CD8-positive, alpha-beta T cell (primary cell): ENCODE measurements at regions of chr2 and their contacts with region 1.

Region 1: GRCh38 chr2:241315093-241315878 is at the start of gene HDLBP:
- DNase-seq: peak; percentile 100
- ATAC-seq: peak; percentile 73
- H3K4me3 ChIP-seq: peak within 1 kb of the TSS; percentile 91 to 92
- H3K4me3 Mint-ChIP-seq: peak within 1 kb of the TSS; percentile 98
- H3K27ac ChIP-seq: peak within 1 kb of the TSS; percentile 92 to 99
- H3K27ac Mint-ChIP-seq: peak within 1 kb of the TSS; percentile 99
- H3K4me1 ChIP-seq: peaks cover 69% of the 10 kb centered on the region
- H3K4me1 Mint-ChIP-seq: peaks cover 74% of the 10 kb centered on the region
- H3K27me3 ChIP-seq: no peaks in the 10 kb centered on the region
- H3K27me3 Mint-ChIP-seq: no peaks in the 10 kb centered on the region
- CTCF ChIP-seq: no peak
- total RNA-seq, gene HDLBP: 97.5 to 104 TPM

Region 2: DNA sequence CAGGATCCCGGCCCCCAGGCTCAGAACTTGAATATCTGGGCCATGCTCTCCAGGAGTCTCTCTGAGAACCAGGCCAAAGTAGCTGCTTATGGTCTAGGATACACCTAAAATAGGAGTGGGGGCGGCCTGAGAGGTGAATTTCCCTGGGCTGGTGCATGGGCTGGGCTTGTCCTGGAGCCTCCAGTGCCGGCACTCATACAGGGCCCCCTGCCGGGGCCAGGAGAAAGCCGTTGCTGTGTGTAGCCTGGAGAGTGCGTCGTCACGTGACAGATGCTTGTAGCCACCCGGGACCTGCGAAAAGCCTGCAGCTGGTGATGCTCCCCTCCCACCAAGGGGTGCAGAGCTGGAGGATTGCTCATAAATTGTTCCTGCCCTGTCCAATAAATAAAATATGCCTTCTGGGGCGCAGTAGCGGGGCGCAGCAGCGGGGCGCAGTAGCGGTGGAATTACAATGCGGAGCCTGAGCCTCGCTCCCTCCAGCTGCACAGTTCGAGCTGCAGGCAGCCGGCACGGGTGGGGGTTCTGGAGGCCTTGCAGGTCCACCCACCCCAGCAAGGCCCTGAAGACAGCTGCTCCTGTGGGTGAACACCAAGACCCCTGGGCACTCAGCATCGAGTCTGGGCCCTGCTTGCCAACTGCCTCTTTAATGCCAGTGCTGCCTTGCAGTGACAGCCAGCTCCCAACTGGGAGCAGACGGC is 1580.0 kb before region 1 on chr2:
- CTCF ChIA-PET with region 1: no interaction called
- POLR2A ChIA-PET with region 1: no interaction called
- intact Hi-C with region 1: no loop called
- DNase-seq: no peak
- ATAC-seq: no peak
- H3K4me3 ChIP-seq: no peak overlapping the region
- H3K4me3 Mint-ChIP-seq: no peak overlapping the region
- H3K27ac ChIP-seq: no peak overlapping the region
- H3K27ac Mint-ChIP-seq: no peak overlapping the region
- H3K4me1 ChIP-seq: no peaks in the 10 kb centered on the region
- H3K4me1 Mint-ChIP-seq: no peaks in the 10 kb centered on the region
- H3K27me3 ChIP-seq: peaks cover 0 to 2% of the 10 kb centered on the region in 2 experiments
- H3K27me3 Mint-ChIP-seq: no peaks in the 10 kb centered on the region
- CTCF ChIP-seq: no peak

Region 3: DNA sequence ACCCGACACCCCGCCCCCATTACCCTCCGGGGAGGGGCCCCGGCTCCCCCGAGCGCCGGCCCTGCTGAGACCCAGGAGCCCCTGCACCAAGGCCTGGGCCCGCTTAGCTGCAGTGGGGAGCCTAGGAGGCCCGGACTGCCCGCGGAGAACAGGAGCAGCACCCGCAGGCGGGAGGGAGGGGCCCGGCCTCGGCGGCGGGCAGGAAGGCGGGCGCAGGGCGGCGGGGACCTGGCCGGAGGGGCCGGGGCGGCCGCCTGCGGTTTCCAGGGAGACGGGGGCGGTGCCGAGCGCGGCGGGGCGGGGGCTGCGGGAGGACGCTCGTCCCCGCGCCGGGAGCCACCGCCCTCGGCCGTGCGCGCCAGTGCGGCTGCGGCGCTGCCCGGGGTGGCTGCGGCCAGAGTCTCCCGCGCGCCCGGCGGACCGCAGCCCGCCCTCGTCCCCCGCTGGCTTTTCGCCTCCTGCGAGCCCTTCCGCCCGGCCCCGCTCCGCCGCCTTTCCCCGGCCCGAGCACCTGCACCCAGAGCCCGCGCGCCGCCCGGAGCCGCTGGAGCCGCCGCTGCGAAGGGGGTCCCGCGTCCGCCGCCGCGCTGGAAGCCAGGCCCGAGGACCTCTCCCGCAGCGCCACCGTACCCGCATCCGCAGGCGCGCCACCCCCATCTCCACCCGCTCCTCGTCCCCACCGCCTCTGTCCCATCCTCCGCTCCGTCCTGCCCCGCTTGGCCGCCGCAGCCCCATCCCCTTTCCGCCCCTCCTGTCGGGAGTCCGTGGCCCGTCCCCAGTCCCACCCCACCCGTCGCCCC is 862.6 kb before region 1 on chr2:
- CTCF ChIA-PET with region 1: no interaction called
- POLR2A ChIA-PET with region 1: no interaction called
- intact Hi-C with region 1: no loop called
- DNase-seq: peak in 1 of 9 experiments; percentile 17
- ATAC-seq: no peak
- H3K4me3 ChIP-seq: peak overlapping the region in 1 of 2 experiments; percentile 6
- H3K4me3 Mint-ChIP-seq: peak overlapping the region; percentile 71
- H3K27ac ChIP-seq: no peak overlapping the region
- H3K27ac Mint-ChIP-seq: no peak overlapping the region
- H3K4me1 ChIP-seq: peaks cover 17% of the 10 kb centered on the region
- H3K4me1 Mint-ChIP-seq: peaks cover 12% of the 10 kb centered on the region
- H3K27me3 ChIP-seq: peaks cover 26 to 28% of the 10 kb centered on the region in 2 experiments
- H3K27me3 Mint-ChIP-seq: peaks cover 38% of the 10 kb centered on the region
- CTCF ChIP-seq: no peak

Region 4: GRCh38 chr2:240560480-240561326 is 754.6 kb before region 1 on chr2:
- CTCF ChIA-PET with region 1: no interaction called
- POLR2A ChIA-PET with region 1: no interaction called
- intact Hi-C with region 1: loop called in 1 of 2 experiments (anchors 2 kb)
- DNase-seq: peak; percentile 98 to 100 (median 100)
- ATAC-seq: peak; percentile 59
- H3K4me3 ChIP-seq: peak overlapping the region; percentile 74 to 76
- H3K4me3 Mint-ChIP-seq: peak overlapping the region; percentile 89
- H3K27ac ChIP-seq: peak overlapping the region; percentile 82 to 84
- H3K27ac Mint-ChIP-seq: peak overlapping the region; percentile 96
- H3K4me1 ChIP-seq: peaks cover 80% of the 10 kb centered on the region
- H3K4me1 Mint-ChIP-seq: peaks cover 71% of the 10 kb centered on the region
- H3K27me3 ChIP-seq: no peaks in the 10 kb centered on the region
- H3K27me3 Mint-ChIP-seq: no peaks in the 10 kb centered on the region
- CTCF ChIP-seq: no peak

Region 5: DNA sequence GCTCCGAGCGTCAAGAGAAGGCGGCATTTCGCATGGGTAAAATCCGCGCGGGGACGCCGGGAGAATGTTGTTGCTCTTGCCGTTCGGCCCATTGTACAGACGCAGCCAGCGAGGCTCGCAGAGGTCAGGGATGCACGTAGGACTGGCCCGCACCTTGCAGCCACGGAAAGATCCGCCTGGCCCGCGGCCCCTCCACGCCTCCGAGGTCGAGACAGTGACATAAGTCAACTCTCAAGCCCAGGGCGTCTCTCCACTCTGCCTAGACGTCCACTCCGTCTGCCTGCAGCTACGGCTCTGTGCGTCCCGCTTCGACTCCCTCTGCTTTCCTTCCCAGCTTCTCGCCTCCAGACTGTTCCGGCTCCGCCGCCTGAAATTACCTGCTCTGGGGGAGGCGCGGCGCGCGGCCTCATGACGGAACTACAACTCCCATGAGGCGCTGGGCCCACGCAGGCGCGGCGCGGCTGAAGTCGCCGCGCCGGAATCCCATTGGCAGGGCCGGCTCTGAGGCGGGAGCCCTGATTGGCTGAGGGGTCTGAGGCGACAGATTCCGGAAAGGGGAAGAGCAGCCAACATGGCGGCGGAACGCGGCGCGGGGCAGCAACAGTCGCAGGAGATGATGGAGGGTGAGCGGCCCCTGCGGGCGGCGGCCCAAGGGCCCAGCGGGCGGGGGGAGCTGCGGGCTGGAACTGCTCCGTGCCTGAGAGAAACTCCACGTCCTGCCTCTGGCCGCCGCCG is 165.2 kb before region 1 on chr2 and contains the start of gene PPP1R7:
- CTCF ChIA-PET with region 1: no interaction called
- POLR2A ChIA-PET with region 1: no interaction called
- intact Hi-C with region 1: loop called (anchors 1 kb)
- DNase-seq: peak; percentile 91 to 98 (median 94)
- ATAC-seq: peak; percentile 79
- H3K4me3 ChIP-seq: peak within 1 kb of the TSS; percentile 95 to 99
- H3K4me3 Mint-ChIP-seq: peak within 1 kb of the TSS; percentile 99
- H3K27ac ChIP-seq: peak within 1 kb of the TSS; percentile 67 to 70
- H3K27ac Mint-ChIP-seq: peak within 1 kb of the TSS; percentile 95
- H3K4me1 ChIP-seq: peaks cover 21% of the 10 kb centered on the region
- H3K4me1 Mint-ChIP-seq: peaks cover 48% of the 10 kb centered on the region
- H3K27me3 ChIP-seq: no peaks in the 10 kb centered on the region
- H3K27me3 Mint-ChIP-seq: no peaks in the 10 kb centered on the region
- CTCF ChIP-seq: peak; percentile 51
- total RNA-seq, gene PPP1R7: 47.5 to 50.9 TPM

Region 6: DNA sequence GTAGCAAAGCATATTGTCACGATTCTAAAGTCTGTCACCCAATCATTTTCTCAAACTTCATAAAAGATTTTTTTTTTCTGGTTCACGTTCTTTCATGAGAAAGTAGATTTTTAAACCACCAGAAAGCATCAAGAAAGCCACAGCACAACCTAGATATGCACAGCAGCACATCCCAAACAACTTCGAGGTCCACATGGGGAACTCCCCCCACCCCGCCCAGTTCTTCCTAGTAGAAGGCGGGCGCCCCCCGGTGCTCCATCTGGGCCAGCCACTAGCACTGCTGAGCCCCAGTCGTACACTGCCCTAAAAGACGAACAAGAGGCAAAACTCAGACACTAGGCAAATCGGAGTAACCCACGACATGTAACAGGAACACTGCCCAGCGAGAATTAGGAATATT is 15.3 kb before region 1 on chr2:
- CTCF ChIA-PET with region 1: interaction called, 3 read pairs
- POLR2A ChIA-PET with region 1: interaction called, 27 read pairs
- intact Hi-C with region 1: loop called in 1 of 2 experiments (anchors 1 kb)
- DNase-seq: peak in 8 of 9 experiments; percentile 22 to 83 (median 68)
- ATAC-seq: peak; percentile 94
- H3K4me3 ChIP-seq: no peak overlapping the region
- H3K4me3 Mint-ChIP-seq: peak overlapping the region; percentile 56
- H3K27ac ChIP-seq: no peak overlapping the region
- H3K27ac Mint-ChIP-seq: peak overlapping the region; percentile 77
- H3K4me1 ChIP-seq: peaks cover 23% of the 10 kb centered on the region
- H3K4me1 Mint-ChIP-seq: peaks cover 66% of the 10 kb centered on the region
- H3K27me3 ChIP-seq: no peaks in the 10 kb centered on the region
- H3K27me3 Mint-ChIP-seq: no peaks in the 10 kb centered on the region
- CTCF ChIP-seq: peak; percentile 37

Region 7: GRCh38 chr2:241609859-241610793 is 294.8 kb after region 1 on chr2:
- CTCF ChIA-PET with region 1: no interaction called
- POLR2A ChIA-PET with region 1: no interaction called
- intact Hi-C with region 1: loop called (anchors 5 kb)
- DNase-seq: peak; percentile 81 to 96 (median 92)
- ATAC-seq: peak; percentile 99
- H3K4me3 ChIP-seq: peak overlapping the region; percentile 53 to 59
- H3K4me3 Mint-ChIP-seq: peak overlapping the region; percentile 63
- H3K27ac ChIP-seq: peak overlapping the region; percentile 51 to 77
- H3K27ac Mint-ChIP-seq: peak overlapping the region; percentile 72
- H3K4me1 ChIP-seq: peaks cover 23% of the 10 kb centered on the region
- H3K4me1 Mint-ChIP-seq: peaks cover 26% of the 10 kb centered on the region
- H3K27me3 ChIP-seq: no peaks in the 10 kb centered on the region
- H3K27me3 Mint-ChIP-seq: no peaks in the 10 kb centered on the region
- CTCF ChIP-seq: peak; percentile 63

Region 8: DNA sequence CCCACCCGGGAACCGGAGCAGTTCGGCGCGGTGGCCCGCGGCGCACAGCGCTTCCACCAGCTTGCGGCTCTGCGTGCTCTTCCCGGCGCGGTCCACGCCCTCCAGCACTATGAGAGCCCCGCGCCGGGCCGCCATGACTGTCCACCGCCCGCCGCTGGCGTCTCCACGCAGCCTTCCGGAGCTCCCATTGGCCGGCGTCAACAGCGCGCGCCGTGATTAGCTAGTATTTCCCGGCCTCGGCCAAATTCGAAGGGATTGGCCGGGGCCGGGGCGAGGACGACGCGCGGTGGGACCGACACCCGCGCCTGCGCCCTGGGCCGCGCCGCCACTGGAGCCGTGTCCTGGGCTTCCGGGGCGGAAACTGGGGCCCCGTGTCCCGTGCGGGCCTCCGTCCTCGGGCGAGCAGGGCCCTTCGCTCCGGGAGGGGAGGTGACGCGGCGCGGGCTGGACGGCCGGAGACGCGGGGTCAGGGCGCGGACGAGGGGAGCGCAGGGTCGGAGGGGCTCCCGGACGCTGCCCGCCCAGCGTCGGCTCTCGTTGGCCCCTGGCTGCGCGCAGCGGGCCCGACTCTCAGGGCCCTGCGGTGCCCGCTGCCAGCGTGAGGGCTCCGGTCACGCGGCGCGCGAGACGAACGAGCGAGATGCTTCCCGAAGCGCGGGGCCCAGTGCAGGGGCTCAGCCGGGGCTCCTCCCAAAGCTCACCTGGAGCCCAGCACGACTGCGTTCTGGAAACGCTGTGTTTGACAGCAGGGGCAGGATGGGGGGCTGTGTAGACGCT is 371.6 kb after region 1 on chr2 and contains the start of gene DTYMK:
- CTCF ChIA-PET with region 1: no interaction called
- POLR2A ChIA-PET with region 1: no interaction called
- intact Hi-C with region 1: loop called (anchors 1 to 5 kb)
- DNase-seq: peak; percentile 89 to 98 (median 95)
- ATAC-seq: peak; percentile 95
- H3K4me3 ChIP-seq: peak within 1 kb of the TSS; percentile 87 to 98
- H3K4me3 Mint-ChIP-seq: peak within 1 kb of the TSS; percentile 90
- H3K27ac ChIP-seq: peak within 1 kb of the TSS; percentile 74 to 81
- H3K27ac Mint-ChIP-seq: peak within 1 kb of the TSS; percentile 91
- H3K4me1 ChIP-seq: peaks cover 21% of the 10 kb centered on the region
- H3K4me1 Mint-ChIP-seq: peaks cover 24% of the 10 kb centered on the region
- H3K27me3 ChIP-seq: no peaks in the 10 kb centered on the region
- H3K27me3 Mint-ChIP-seq: no peaks in the 10 kb centered on the region
- CTCF ChIP-seq: no peak
- total RNA-seq, gene DTYMK: 3.7 to 6.0 TPM